A673 (cell line): ENCODE measurements at regions of chr2 and their contacts with region 1.

Region 1: DNA sequence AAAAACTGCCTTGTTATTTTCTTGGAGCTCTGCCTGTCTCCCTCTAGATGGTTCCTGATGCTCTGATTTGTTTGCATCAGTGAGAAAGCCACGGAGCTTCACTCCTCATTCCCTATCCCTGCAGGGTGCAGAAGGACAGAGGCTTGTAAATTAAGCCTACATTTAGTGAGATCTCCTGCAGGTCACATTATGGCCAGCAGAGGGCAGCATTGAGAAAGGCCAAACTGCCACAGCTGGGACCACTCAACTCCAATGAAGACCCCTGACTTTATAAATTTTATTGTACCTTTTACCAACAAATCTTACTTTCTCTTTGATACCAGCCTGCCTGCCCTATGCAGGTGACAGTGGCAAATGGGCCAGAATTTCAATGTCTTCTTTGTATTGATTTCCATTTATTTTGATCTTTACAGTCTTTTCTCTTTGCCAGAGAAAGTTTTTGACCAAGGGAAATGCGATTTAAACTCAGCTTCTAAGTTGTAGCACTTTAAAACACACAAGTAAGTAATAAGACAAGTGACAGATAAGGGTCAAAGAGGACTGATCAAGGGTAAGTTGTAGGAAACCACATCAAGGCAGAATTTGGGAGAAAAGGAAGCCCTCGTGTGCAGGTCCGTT is 1029.1 kb upstream of the KLHL29 start:
- DNase-seq: peak; percentile 50
- H3K4me3 ChIP-seq: no peak overlapping the region
- H3K27ac ChIP-seq: no peak overlapping the region
- H3K4me1 ChIP-seq: no peaks in the 10 kb centered on the region
- H3K27me3 ChIP-seq: peaks cover 20% of the 10 kb centered on the region
- CTCF ChIP-seq: peak; percentile 95

Region 2: DNA sequence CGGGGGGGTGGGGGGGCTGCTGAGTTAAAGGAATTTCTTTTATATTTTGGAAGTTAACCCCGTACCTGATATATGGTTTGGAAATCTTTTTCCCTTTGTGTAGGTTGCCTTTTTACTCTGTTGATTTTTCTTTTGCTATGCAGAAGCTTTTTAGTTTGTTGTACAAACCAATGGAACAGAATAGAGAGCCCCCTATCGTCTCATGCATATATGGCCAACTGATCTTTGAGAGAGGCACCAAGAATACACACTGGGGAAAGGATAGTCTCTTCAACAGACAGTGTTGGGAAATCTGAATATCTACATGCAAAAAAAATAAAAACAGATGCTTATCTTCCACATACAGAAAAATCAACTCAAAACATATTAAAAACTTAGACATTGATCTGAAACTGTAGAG is 381.2 kb after region 1 on chr2:
- CTCF ChIA-PET with region 1: no interaction called
- POLR2A ChIA-PET with region 1: no interaction called
- intact Hi-C with region 1: loop called (anchors 10 kb)
- DNase-seq: peak; percentile 22
- H3K4me3 ChIP-seq: no peak overlapping the region
- H3K27ac ChIP-seq: no peak overlapping the region
- H3K4me1 ChIP-seq: no peaks in the 10 kb centered on the region
- H3K27me3 ChIP-seq: no peaks in the 10 kb centered on the region
- CTCF ChIP-seq: peak; percentile 51

Region 3: GRCh38 chr2:23351388-23352141 is 995.6 kb after region 1 on chr2:
- CTCF ChIA-PET with region 1: no interaction called
- POLR2A ChIA-PET with region 1: no interaction called
- intact Hi-C with region 1: loop called (anchors 5 kb)
- DNase-seq: peak; percentile 92
- H3K4me3 ChIP-seq: no peak overlapping the region
- H3K27ac ChIP-seq: no peak overlapping the region
- H3K4me1 ChIP-seq: no peaks in the 10 kb centered on the region
- H3K27me3 ChIP-seq: peaks cover 1% of the 10 kb centered on the region
- CTCF ChIP-seq: peak; percentile 95

Region 4: DNA sequence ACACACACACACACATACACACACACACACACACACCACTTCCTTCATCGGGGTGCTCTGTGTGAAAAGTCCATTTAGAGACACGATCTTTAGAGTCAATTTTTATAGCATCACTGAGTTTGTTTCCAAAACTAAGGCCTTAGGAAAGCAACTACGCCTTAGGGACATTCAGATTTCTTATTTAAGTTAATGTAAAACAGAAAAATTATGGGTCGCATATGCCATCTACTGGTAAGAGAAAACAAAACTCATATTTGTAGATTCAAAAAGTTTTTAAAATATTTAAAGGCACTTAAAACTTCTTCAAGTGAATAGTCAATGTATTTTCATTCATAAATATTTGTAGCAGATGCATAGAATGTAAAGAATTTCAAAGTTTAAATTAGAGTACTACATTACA is 1404.8 kb after region 1 on chr2:
- CTCF ChIA-PET with region 1: no interaction called
- POLR2A ChIA-PET with region 1: no interaction called
- intact Hi-C with region 1: loop called (anchors 10 kb)
- DNase-seq: peak; percentile 72
- H3K4me3 ChIP-seq: no peak overlapping the region
- H3K27ac ChIP-seq: peak overlapping the region; percentile 29
- H3K4me1 ChIP-seq: peaks cover 55% of the 10 kb centered on the region
- H3K27me3 ChIP-seq: no peaks in the 10 kb centered on the region
- CTCF ChIP-seq: peak; percentile 64